Activated CD4-positive, alpha-beta T cell treated with anti-CD3 and anti-CD28 coated beads, Interleukin-2, amount 10 ng/mL, durations not matched to agents 24 days and 14 days (primary cell): ENCODE measurements at regions of chr3 and their contacts with region 1.

Region 1: DNA sequence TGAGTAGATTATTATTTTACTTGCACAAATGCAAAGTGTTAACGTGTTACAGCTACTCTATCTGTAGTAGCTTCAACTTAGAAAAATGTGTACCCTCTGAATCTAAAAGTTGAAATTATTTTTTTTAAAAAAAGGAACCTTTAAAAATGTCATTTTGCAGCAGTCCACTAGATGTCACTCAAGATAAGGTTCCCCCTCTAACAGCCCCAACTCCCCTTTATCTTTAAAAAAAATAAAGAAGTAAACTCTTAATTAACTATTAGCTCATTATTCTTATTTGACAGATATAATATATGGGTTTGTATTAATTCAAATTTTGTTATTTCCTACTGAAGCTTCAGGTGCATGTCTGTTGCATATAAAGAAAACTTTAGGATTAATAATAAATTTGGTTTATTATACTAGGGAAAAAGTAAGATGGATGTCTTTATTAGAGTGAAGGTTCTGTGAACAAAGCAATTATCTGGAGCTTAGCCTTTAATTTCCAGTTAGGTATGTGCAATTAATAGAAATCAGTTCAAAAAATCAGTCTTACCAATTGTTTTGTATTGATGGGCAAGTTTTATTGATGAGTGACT is 288.5 kb downstream of the VGLL3 start:
- DNase-seq: no peak
- H3K4me3 Mint-ChIP-seq: no peak overlapping the region
- H3K27ac Mint-ChIP-seq: no peak overlapping the region
- H3K4me1 Mint-ChIP-seq: no peaks in the 10 kb centered on the region
- H3K27me3 Mint-ChIP-seq: no peaks in the 10 kb centered on the region

Region 2: GRCh38 chr3:85433319-85433718 is 1269.2 kb before region 1 on chr3:
- intact Hi-C with region 1: no loop called
- DNase-seq: no peak
- H3K4me3 Mint-ChIP-seq: no peak overlapping the region
- H3K27ac Mint-ChIP-seq: no peak overlapping the region
- H3K4me1 Mint-ChIP-seq: no peaks in the 10 kb centered on the region
- H3K27me3 Mint-ChIP-seq: no peaks in the 10 kb centered on the region

Region 3: DNA sequence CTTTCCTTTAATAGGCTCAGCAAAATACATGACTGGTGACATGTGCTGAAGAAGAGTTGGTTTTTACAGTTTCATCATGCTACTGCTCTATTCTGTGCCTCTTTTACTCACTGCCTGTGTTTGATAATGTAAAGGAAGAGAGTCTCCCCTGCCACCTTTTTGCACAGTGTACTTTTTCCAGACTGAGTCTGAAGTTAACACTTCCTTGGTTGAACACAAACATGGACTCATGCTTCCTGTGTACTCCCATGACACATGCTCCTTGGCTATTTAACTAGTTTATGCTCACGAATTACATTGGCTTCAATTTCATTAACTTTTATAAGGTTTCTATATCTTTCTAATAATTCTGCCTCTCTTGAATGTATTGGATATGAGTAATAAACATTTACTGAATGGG is 107.6 kb before region 1 on chr3:
- intact Hi-C with region 1: no loop called
- DNase-seq: no peak
- H3K4me3 Mint-ChIP-seq: no peak overlapping the region
- H3K27ac Mint-ChIP-seq: no peak overlapping the region
- H3K4me1 Mint-ChIP-seq: no peaks in the 10 kb centered on the region
- H3K27me3 Mint-ChIP-seq: no peaks in the 10 kb centered on the region

Region 4: GRCh38 chr3:87173776-87174175 is 471.3 kb after region 1 on chr3:
- intact Hi-C with region 1: loop called (anchors 5 kb)
- DNase-seq: no peak
- H3K4me3 Mint-ChIP-seq: no peak overlapping the region
- H3K27ac Mint-ChIP-seq: no peak overlapping the region
- H3K4me1 Mint-ChIP-seq: no peaks in the 10 kb centered on the region
- H3K27me3 Mint-ChIP-seq: no peaks in the 10 kb centered on the region